ENCODE measurements at regions of chr18 and their contacts with region 1.

Region 1: DNA sequence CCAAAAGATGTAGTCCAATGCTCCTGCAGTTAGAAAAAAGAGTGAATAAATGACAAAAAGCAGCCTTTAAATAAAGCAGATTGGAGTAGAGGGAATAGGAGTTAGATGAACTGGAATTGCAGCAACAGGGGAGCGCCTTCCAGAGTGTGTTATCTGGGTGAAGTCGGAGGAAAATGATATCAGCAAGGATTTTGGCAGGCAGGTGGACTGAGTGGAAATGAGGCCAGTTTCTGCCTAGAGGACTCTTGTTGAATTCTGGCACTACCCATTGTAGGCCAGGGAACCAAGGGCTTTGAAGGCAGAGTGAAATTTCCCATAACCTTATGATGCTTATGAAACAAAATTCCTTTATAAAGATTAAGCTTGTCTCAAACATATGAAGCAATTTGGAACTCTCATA is 59.8 kb downstream of the AKAIN1 start:
- DNase-seq: peak in 1 of 10 donors; percentile 77
- H3K4me3 ChIP-seq: no peak overlapping the region
- H3K27ac ChIP-seq: peak overlapping the region in 1 of 59 donors; percentile 50
- H3K27me3 ChIP-seq: no peaks in the 10 kb centered on the region
- CTCF ChIP-seq: no peak

Region 2: GRCh38 chr18:3806656-3807055 is 1330.6 kb before region 1 on chr18:
- intact Hi-C with region 1: loop called in 1 of 2 experiments (anchors 10 kb)
- DNase-seq: no peak
- H3K4me3 ChIP-seq: no peak overlapping the region
- H3K27ac ChIP-seq: peak overlapping the region in 51 of 59 donors; percentile 5 to 83 (median 53)
- H3K27me3 ChIP-seq: no peaks in the 10 kb centered on the region
- CTCF ChIP-seq: no peak

Measured in dorsolateral prefrontal cortex (tissue), 120 donors.